RWPE1 (cell line): ENCODE measurements at regions of chr20 and their contacts with region 1.

Region 1: GRCh38 chr20:61161726-61162390 is 90.2 kb upstream of the CDH4 start:
- DNase-seq: no peak
- H3K27ac ChIP-seq: no peak overlapping the region
- CTCF ChIP-seq: no peak

Region 2: DNA sequence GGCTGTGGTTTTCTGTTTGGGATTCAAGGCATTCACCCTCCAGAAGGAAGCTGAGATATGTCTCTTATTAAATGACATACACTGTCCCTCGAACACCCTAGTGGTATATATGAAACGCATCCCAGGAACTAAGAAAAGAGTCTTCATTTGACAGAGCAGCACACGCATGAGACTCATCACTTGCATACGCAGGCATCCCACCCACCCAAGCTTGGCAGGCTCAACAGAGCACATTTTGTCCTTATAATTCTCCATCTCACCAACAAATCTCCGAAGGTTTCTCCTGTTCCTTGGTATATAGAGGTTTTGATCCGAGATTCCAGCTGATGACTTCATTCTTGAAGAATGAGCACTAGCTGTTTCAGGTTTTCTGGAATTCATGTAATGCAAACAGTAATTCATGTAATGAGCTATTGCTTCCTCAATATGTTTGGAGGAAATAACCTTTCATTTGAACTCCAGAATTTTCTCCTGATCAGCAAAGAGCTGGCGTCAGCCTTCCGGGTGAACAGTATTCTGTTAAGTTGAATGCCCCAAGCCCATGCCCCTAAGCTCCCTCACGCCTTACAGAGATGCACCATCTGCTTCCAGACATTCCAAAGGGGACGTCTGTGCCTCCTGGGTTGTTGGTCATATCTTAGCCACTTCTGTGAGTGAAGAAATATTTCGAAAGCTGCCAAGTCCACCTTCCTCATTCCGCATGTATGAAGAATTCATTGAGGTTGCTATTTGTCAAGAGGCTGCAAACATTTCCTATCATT is 24.2 kb after region 1 on chr20:
- CTCF ChIA-PET with region 1: interaction called, 10 read pairs
- POLR2A ChIA-PET with region 1: no interaction called
- DNase-seq: peak; percentile 90
- H3K27ac ChIP-seq: peak overlapping the region; percentile 48; the same call in 1 of the 2 replicates
- CTCF ChIP-seq: no peak